K562 (cell line): ENCODE measurements at regions of chr12 and their contacts with region 1.

Region 1: GRCh38 chr12:5022465-5023061 is 21.1 kb upstream of the KCNA5 start:
- DNase-seq: peak; percentile 34 to 67 (median 62)
- ATAC-seq: peak; percentile 74; the same call in 2 of the 3 replicates
- H3K4me3 ChIP-seq: no peak overlapping the region
- H3K27ac ChIP-seq: no peak overlapping the region
- H3K4me1 ChIP-seq: peaks cover 0 to 6% of the 10 kb centered on the region in 2 experiments; a peak in 3 of 5 replicates
- H3K27me3 ChIP-seq: peaks cover 0 to 15% of the 10 kb centered on the region in 2 experiments; a peak in 2 of 5 replicates
- CTCF ChIP-seq: peak; percentile 62 to 79 (median 65)
- EP300 ChIP-seq: no peak
- POLR2A ChIP-seq: no peak
- RAD21 ChIP-seq: peak; percentile 32 to 67; a peak in 3 of 4 replicates

Region 2: DNA sequence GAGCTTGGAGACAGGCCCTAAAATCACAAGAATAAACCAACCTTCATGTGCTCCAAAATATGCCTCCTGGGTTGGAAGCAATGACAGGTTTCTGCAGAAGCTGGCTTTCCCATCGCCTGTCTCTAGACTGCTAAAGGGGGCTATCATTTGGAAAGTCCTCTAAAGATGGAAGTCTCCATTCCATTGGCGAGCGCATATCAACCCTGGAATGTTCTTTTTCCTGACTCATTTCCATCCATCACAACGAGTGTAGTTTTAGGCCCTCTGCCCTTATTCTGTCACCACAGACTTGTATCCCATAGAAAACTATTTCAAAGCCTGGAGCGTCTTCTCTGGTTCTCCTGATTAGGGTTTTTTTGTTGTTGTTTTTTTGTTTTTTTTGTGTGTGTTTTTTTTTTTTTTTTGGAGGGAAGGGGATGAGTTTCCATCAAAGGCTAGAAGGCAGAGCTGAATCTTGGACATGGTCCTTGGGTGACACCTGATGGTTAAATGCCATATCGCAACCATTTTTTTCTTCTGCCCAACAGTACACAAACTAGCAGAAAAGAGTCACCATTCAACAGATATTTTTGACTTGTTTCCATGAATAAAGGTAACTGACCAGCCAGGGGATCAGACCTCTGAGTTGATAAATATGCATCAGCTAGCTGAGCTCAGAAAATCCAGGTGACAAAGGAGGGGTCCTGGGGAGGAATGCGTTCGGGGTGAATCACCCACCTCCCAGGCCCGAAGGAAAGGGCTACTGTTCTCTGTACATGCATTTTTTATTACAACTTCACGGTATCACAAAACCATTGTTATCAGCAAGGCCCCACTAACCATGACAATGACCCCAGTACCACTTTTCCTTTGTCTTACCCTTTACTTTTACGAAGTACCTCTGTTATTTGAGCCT is 61.6 kb after region 1 on chr12:
- CTCF ChIA-PET with region 1: interaction called, 21 read pairs
- POLR2A ChIA-PET with region 1: no interaction called
- in situ Hi-C with region 1: no loop called
- intact Hi-C with region 1: loop called (anchors 1 kb)
- DNase-seq: peak; percentile 39 to 47 (median 44)
- ATAC-seq: no peak
- H3K4me3 ChIP-seq: no peak overlapping the region
- H3K27ac ChIP-seq: no peak overlapping the region
- H3K4me1 ChIP-seq: no peaks in the 10 kb centered on the region; a peak in 1 of 5 replicates
- H3K27me3 ChIP-seq: peaks cover 0 to 20% of the 10 kb centered on the region in 2 experiments; a peak in 1 of 5 replicates
- CTCF ChIP-seq: peak; percentile 50 to 65 (median 54); a peak in 5 of 6 replicates
- EP300 ChIP-seq: no peak
- POLR2A ChIP-seq: no peak
- RAD21 ChIP-seq: peak in 1 of 2 experiments; percentile 61; a peak in 2 of 4 replicates